HepG2 (cell line): ENCODE measurements at regions of chr1 and their contacts with region 1.

Region 1: GRCh38 chr1:53278201-53278725 is 39.9 kb upstream of the MAGOH start:
- DNase-seq: peak; percentile 4
- ATAC-seq: peak; percentile 79
- H3K4me3 ChIP-seq: no peak overlapping the region
- H3K27ac ChIP-seq: no peak overlapping the region
- H3K4me1 ChIP-seq: no peaks in the 10 kb centered on the region
- H3K27me3 ChIP-seq: no peaks in the 10 kb centered on the region
- CTCF ChIP-seq: peak; percentile 84
- EP300 ChIP-seq: no peak
- POLR2A ChIP-seq: no peak
- RAD21 ChIP-seq: peak; percentile 82

Region 2: GRCh38 chr1:53246261-53247134 is 31.8 kb before region 1 on chr1:
- CTCF ChIA-PET with region 1: no interaction called
- POLR2A ChIA-PET with region 1: no interaction called
- in situ Hi-C with region 1: no loop called
- intact Hi-C with region 1: no loop called
- DNase-seq: no peak
- ATAC-seq: no peak
- H3K4me3 ChIP-seq: no peak overlapping the region
- H3K27ac ChIP-seq: no peak overlapping the region
- H3K4me1 ChIP-seq: no peaks in the 10 kb centered on the region
- H3K27me3 ChIP-seq: no peaks in the 10 kb centered on the region
- CTCF ChIP-seq: no peak
- EP300 ChIP-seq: no peak
- POLR2A ChIP-seq: no peak
- RAD21 ChIP-seq: no peak

Region 3: GRCh38 chr1:53310847-53311681 is 32.8 kb after region 1 on chr1:
- CTCF ChIA-PET with region 1: no interaction called
- POLR2A ChIA-PET with region 1: no interaction called
- in situ Hi-C with region 1: no loop called
- intact Hi-C with region 1: no loop called
- DNase-seq: no peak
- ATAC-seq: no peak
- H3K4me3 ChIP-seq: no peak overlapping the region
- H3K27ac ChIP-seq: no peak overlapping the region
- H3K4me1 ChIP-seq: peaks cover 11% of the 10 kb centered on the region; the same call in 1 of the 2 replicates
- H3K27me3 ChIP-seq: no peaks in the 10 kb centered on the region
- CTCF ChIP-seq: no peak
- EP300 ChIP-seq: no peak
- POLR2A ChIP-seq: no peak
- RAD21 ChIP-seq: no peak

Region 4: GRCh38 chr1:53393325-53393792 is 115.1 kb after region 1 on chr1:
- CTCF ChIA-PET with region 1: interaction called, 47 read pairs
- POLR2A ChIA-PET with region 1: no interaction called
- in situ Hi-C with region 1: loop called (anchors 5 kb)
- intact Hi-C with region 1: loop called (anchors 1 kb)
- DNase-seq: peak; percentile 43
- ATAC-seq: peak; percentile 91
- H3K4me3 ChIP-seq: no peak overlapping the region
- H3K27ac ChIP-seq: no peak overlapping the region
- H3K4me1 ChIP-seq: no peaks in the 10 kb centered on the region
- H3K27me3 ChIP-seq: peaks cover 4 to 34% of the 10 kb centered on the region in 2 experiments; a peak in 3 of 5 replicates
- CTCF ChIP-seq: peak; percentile 92
- EP300 ChIP-seq: no peak
- POLR2A ChIP-seq: no peak
- RAD21 ChIP-seq: peak; percentile 89